Activated CD8-positive, alpha-beta T cell treated with anti-CD3 and anti-CD28 coated beads for 36 hours (primary cell): ENCODE measurements at regions of chr22 and their contacts with region 1.

Region 1: GRCh38 chr22:23178512-23179254 is 1.6 kb upstream of the BCR start:
- DNase-seq: peak; percentile 62
- ATAC-seq: no peak
- H3K4me3 Mint-ChIP-seq: peak overlapping the region; percentile 3
- H3K27ac Mint-ChIP-seq: no peak overlapping the region
- H3K4me1 Mint-ChIP-seq: peaks cover 42% of the 10 kb centered on the region
- H3K27me3 Mint-ChIP-seq: no peaks in the 10 kb centered on the region
- CTCF ChIP-seq: peak; percentile 100

Region 2: GRCh38 chr22:23215294-23216241 is 36.9 kb after region 1 on chr22:
- CTCF ChIA-PET with region 1: interaction called, 5 read pairs
- POLR2A ChIA-PET with region 1: interaction called, 10 read pairs
- intact Hi-C with region 1: loop called (anchors 2 kb)
- DNase-seq: peak; percentile 33
- ATAC-seq: no peak
- H3K4me3 Mint-ChIP-seq: peak overlapping the region; percentile 66
- H3K27ac Mint-ChIP-seq: peak overlapping the region; percentile 95
- H3K4me1 Mint-ChIP-seq: peaks cover 73% of the 10 kb centered on the region
- H3K27me3 Mint-ChIP-seq: no peaks in the 10 kb centered on the region
- CTCF ChIP-seq: no peak

Region 3: GRCh38 chr22:23237201-23237798 is 58.6 kb after region 1 on chr22:
- CTCF ChIA-PET with region 1: interaction called, 22 read pairs
- POLR2A ChIA-PET with region 1: interaction called, 8 read pairs
- intact Hi-C with region 1: loop called (anchors 5 kb)
- DNase-seq: no peak
- ATAC-seq: no peak
- H3K4me3 Mint-ChIP-seq: no peak overlapping the region
- H3K27ac Mint-ChIP-seq: peak overlapping the region; percentile 46
- H3K4me1 Mint-ChIP-seq: peaks cover 82% of the 10 kb centered on the region
- H3K27me3 Mint-ChIP-seq: no peaks in the 10 kb centered on the region
- CTCF ChIP-seq: no peak

Region 4: GRCh38 chr22:23256171-23256932 is 77.7 kb after region 1 on chr22:
- CTCF ChIA-PET with region 1: interaction called, 11 read pairs
- POLR2A ChIA-PET with region 1: no interaction called
- intact Hi-C with region 1: no loop called
- DNase-seq: no peak
- ATAC-seq: no peak
- H3K4me3 Mint-ChIP-seq: no peak overlapping the region
- H3K27ac Mint-ChIP-seq: no peak overlapping the region
- H3K4me1 Mint-ChIP-seq: peaks cover 22% of the 10 kb centered on the region
- H3K27me3 Mint-ChIP-seq: no peaks in the 10 kb centered on the region
- CTCF ChIP-seq: no peak

Region 5: DNA sequence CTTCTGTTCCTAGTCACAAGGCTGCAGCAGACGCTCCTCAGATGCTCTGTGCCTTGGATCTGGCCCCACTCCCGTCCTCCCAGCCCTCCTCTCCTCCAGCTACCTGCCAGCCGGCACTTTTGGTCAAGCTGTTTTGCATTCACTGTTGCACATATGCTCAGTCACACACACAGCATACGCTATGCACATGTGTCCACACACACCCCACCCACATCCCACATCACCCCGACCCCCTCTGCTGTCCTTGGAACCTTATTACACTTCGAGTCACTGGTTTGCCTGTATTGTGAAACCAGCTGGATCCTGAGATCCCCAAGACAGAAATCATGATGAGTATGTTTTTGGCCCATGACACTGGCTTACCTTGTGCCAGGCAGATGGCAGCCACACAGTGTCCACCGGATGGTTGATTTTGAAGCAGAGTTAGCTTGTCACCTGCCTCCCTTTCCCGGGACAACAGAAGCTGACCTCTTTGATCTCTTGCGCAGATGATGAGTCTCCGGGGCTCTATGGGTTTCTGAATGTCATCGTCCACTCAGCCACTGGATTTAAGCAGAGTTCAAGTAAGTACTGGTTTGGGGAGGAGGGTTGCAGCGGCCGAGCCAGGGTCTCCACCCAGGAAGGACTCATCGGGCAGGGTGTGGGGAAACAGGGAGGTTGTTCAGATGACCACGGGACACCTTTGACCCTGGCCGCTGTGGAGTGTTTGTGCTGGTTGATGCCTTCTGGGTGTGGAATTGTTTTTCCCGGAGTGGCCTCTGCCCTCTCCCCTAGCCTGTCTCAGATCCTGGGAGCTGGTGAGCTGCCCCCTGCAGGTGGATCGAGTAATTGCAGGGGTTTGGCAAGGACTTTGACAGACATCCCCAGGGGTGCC is 111.4 kb after region 1 on chr22:
- CTCF ChIA-PET with region 1: interaction called, 237 read pairs
- POLR2A ChIA-PET with region 1: no interaction called
- intact Hi-C with region 1: no loop called
- DNase-seq: peak; percentile 69
- ATAC-seq: peak; percentile 85
- H3K4me3 Mint-ChIP-seq: no peak overlapping the region
- H3K27ac Mint-ChIP-seq: no peak overlapping the region
- H3K4me1 Mint-ChIP-seq: no peaks in the 10 kb centered on the region
- H3K27me3 Mint-ChIP-seq: no peaks in the 10 kb centered on the region
- CTCF ChIP-seq: peak; percentile 89